Activated CD4-positive, alpha-beta T cell treated with anti-CD3 and anti-CD28 coated beads, Interleukin-2, amount 10 ng/mL, durations not matched to agents 7 days and 5 days (primary cell): ENCODE measurements at regions of chr4 and their contacts with region 1.

Region 1: DNA sequence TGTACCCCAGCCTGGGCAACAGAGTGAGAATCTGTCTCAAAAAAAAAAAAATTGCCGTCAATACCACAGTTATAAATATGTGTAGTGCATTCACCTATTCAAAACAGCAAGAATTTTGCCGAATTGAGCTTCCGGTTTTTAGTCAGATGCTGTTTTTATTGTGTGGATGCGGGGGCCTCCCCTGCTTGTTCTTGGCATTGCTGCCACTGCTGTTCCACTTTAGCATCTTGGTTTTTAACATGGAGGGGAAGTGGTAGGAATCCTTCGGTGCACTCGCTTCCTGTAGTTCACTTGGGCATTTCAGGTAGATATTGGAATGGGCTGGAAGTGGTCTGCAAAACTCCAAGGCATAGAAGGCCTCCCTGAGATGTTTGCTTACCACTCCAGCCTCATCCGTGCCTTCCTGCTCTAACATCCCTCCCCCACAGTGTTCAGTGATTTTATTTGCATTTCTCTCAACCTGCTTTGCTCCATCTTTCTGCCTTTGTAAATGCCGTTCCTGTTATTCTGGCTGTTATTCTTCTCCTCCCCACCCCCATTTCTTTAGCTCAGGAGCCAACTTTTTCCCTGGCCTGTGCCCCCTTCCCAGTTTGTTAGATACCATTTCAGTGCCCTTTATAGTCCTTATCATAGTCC is 25.5 kb downstream of the MOB1B start:
- DNase-seq: peak; percentile 35
- H3K4me3 Mint-ChIP-seq: peak overlapping the region; percentile 32
- H3K27ac Mint-ChIP-seq: peak overlapping the region; percentile 73
- H3K4me1 Mint-ChIP-seq: peaks cover 43% of the 10 kb centered on the region
- H3K27me3 Mint-ChIP-seq: no peaks in the 10 kb centered on the region

Region 2: DNA sequence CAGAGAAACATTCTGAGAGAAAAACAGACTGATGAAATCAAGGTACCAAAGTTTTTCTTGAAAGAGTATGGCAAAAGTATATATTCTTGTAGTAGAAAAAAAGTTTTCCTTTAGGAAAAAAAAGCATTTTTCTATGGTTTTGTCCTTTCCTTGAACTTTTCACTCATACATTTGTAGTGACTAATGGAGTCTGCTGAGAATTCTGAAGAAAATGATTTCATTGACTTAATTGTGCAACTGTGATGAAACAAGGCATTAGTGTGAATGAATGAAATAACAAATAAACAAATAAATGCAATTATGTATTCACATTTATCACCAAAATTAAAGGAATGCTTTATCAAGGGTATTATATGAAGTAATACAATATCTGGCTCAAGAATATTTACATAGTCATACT is 991.1 kb before region 1 on chr4:
- CTCF ChIA-PET with region 1: no interaction called
- POLR2A ChIA-PET with region 1: no interaction called
- DNase-seq: no peak
- H3K4me3 Mint-ChIP-seq: no peak overlapping the region
- H3K27ac Mint-ChIP-seq: no peak overlapping the region
- H3K4me1 Mint-ChIP-seq: no peaks in the 10 kb centered on the region
- H3K27me3 Mint-ChIP-seq: no peaks in the 10 kb centered on the region

Region 3: GRCh38 chr4:70818173-70818855 is 109.3 kb before region 1 on chr4:
- CTCF ChIA-PET with region 1: no interaction called
- POLR2A ChIA-PET with region 1: no interaction called
- DNase-seq: no peak
- H3K4me3 Mint-ChIP-seq: no peak overlapping the region
- H3K27ac Mint-ChIP-seq: no peak overlapping the region
- H3K4me1 Mint-ChIP-seq: peaks cover 14% of the 10 kb centered on the region
- H3K27me3 Mint-ChIP-seq: no peaks in the 10 kb centered on the region

Region 4: DNA sequence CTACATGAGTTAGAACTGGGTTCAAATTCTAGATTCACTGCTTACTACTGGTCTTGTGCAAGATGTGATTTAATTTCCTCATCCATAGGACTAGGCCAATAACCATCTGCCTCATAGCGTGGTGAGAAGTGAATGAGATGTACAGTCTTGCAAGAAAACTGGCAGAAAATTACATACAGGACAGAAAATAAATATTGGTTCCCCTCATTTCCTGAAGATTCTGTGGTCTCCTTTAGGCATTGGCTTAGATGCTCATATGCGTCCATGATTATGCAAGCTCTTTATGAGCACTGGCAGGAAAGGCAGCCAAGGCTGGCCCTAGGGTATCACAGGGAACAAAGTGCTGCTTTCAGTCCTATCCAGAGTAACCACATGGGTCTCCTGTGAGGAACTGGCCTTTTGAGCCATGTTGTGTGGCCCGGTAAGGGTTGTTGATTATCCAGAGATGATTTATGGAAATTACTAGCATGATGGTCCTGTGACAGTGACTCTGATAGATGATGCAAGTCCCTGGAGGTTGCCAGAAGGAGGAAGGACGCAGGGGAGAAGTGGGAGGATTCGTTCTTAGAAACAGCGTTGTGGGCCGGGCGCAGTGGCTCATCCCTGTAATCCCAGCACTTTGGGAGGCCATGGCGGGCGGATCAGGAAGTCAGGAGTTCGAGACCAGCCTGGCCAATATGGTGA is 35.4 kb before region 1 on chr4:
- CTCF ChIA-PET with region 1: no interaction called
- POLR2A ChIA-PET with region 1: no interaction called
- DNase-seq: no peak
- H3K4me3 Mint-ChIP-seq: no peak overlapping the region
- H3K27ac Mint-ChIP-seq: no peak overlapping the region
- H3K4me1 Mint-ChIP-seq: no peaks in the 10 kb centered on the region
- H3K27me3 Mint-ChIP-seq: no peaks in the 10 kb centered on the region

Region 5: GRCh38 chr4:70915036-70915815 is 12.4 kb before region 1 on chr4:
- CTCF ChIA-PET with region 1: interaction called, 11 read pairs
- POLR2A ChIA-PET with region 1: no interaction called
- DNase-seq: no peak
- H3K4me3 Mint-ChIP-seq: no peak overlapping the region
- H3K27ac Mint-ChIP-seq: no peak overlapping the region
- H3K4me1 Mint-ChIP-seq: no peaks in the 10 kb centered on the region
- H3K27me3 Mint-ChIP-seq: no peaks in the 10 kb centered on the region